H1 (cell line): ENCODE measurements at regions of chr7 and their contacts with region 1.

Region 1: GRCh38 chr7:44875241-44875640 is 10.1 kb downstream of the PURB start:
- DNase-seq: no peak
- H3K4me3 ChIP-seq: no peak overlapping the region
- H3K27ac ChIP-seq: no peak overlapping the region
- H3K4me1 ChIP-seq: no peaks in the 10 kb centered on the region
- H3K27me3 ChIP-seq: no peaks in the 10 kb centered on the region
- CTCF ChIP-seq: no peak
- EP300 ChIP-seq: no peak
- POLR2A ChIP-seq: no peak
- RAD21 ChIP-seq: no peak

Region 2: DNA sequence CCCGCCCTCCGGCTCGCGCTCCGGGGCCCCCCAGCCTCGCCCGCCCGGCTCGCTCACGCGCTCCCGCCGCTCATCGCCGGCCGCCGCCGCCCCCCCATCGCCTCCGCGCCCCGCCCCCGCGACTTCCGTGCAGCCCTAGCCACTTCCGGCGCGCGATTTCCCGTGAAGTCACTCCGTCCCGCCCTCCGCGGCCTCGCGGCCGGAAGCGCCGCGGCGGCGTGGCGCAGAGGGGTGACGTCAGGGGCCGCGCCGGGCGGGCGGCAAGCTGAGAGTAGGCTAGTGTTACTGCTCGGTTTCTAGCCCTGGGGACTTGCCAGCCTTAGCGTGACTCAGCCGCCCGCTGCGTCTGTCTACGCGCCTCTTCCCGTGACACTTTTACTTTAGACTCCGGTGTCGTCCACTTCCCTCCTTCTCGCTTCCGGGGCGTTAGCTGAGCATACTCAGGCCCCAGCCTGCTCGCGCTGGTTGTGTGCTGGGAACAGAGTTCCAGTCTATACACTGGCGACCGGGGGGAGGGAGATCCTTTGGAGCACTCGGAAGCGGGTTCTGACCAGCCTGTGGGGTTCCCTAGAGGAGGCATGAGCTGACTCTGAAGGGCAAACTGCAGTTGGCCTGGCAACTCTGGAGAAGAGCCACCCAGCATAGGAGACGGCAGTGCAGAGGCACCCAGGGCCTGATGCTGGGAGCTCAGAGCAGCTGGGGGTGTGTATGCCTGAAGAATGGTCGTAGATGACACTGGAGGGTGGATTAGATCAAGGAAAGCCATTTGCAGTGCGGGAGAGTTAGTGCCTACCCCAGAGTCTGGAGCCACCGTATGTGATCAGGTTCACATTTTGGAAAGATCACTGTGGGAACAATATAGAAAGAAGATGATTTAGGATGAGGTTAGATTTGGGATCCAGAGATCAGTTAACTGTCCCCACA is 10.4 kb after region 1 on chr7 and contains the start of gene PURB:
- CTCF ChIA-PET with region 1: interaction called, 4 read pairs
- POLR2A ChIA-PET with region 1: interaction called, 15 read pairs
- DNase-seq: peak; percentile 70 to 94
- H3K4me3 ChIP-seq: peak within 1 kb of the TSS; percentile 67 to 94 (median 86)
- H3K27ac ChIP-seq: peak within 1 kb of the TSS; percentile 92
- H3K4me1 ChIP-seq: peaks cover 1 to 11% (median 5%) of the 10 kb centered on the region in 4 experiments; a peak in 5 of 7 replicates
- H3K27me3 ChIP-seq: no peaks in the 10 kb centered on the region
- CTCF ChIP-seq: no peak
- EP300 ChIP-seq: peak in 1 of 2 experiments; percentile 75; a peak in 1 of 3 replicates
- POLR2A ChIP-seq: peak; percentile 87
- RAD21 ChIP-seq: no peak; a peak in 1 of 4 replicates
- total RNA-seq, gene PURB: 21.9 and 22.7 TPM in 2 replicates